ENCODE measurements at regions of chr12 and their contacts with region 1.

Region 1: DNA sequence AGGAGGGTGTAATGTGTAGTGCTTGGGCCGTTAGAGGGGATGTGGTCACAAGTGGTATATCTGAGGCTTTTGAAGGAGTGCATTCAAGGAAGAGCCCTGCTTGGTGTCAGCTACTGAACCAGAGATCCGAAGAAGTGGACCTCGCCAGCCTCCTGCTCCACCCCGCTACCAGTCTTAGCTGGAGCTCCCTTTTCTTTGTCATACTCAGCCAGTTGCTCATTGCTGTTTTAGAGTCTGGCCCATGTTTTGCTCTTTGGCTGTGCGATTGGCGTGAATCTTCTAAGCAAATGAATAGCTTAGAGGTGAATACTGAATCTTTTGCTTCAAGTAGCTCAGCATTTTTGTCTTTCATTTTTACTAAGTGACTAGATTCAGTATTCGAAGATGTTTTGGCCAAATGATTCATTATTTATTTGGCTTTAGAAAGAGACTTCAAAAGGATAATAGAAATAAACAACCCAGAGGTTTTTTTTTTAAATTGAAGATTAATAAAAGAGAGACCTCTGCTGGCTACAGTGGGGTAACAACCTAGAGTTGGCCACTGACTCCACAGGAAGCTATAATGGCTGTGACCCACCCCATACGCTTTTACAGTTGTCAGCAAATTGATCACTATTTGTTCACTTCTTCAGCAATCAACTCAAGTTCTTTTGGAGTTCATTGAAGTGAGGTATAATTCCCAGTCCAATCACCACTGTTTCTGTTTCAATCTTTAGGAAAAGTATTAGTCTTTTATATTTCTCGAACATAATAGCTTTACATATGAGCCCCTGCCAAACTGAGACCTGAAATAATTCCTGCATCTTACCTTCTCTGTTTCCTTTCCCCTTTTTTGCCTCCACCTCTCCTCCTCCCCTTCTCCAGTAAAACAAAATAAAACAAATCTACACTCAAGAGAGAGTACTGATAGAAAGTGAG is 19.9 kb downstream of the CDKN1B start:
- DNase-seq: no peak
- H3K4me3 ChIP-seq: peak overlapping the region; percentile 16; the same call in 1 of the 2 replicates
- CTCF ChIP-seq: peak; percentile 36

Region 2: DNA sequence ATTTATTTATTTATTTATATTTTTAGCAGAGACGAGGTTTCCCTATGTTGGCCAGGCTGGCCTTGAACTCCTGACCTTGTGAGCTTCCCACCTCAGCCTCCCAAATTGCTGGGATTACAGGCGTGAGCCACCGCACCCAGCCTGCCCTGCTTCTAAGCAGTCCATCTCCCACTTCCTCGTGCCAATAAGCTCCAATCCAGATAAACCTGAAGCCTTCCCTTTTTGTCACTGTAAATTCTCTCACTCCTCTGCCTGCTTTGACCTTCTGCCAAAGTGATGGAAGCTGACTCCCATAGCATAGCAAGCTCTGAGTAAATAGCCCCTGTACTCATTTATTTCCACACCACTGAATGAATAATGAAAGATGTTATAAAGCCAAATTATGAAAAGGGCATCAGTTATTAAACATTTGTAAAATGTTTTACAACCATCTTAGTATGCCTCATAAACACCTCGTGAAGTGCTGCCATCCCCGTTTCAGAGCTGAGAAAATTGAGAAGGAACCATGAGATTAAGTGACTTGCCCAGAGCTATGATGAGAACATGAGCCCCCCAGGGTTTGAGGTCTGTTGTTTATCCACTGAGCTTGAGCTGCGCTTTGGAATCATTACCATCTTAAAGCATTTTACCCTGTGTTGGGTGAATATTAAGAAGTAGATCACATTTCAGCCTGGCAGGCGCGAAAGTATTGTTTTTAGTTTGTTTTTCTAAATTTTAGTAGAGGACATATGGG is 417.4 kb before region 1 on chr12:
- CTCF ChIA-PET with region 1: no interaction called
- POLR2A ChIA-PET with region 1: no interaction called
- DNase-seq: no peak
- H3K4me3 ChIP-seq: no peak overlapping the region
- CTCF ChIP-seq: no peak

Region 3: DNA sequence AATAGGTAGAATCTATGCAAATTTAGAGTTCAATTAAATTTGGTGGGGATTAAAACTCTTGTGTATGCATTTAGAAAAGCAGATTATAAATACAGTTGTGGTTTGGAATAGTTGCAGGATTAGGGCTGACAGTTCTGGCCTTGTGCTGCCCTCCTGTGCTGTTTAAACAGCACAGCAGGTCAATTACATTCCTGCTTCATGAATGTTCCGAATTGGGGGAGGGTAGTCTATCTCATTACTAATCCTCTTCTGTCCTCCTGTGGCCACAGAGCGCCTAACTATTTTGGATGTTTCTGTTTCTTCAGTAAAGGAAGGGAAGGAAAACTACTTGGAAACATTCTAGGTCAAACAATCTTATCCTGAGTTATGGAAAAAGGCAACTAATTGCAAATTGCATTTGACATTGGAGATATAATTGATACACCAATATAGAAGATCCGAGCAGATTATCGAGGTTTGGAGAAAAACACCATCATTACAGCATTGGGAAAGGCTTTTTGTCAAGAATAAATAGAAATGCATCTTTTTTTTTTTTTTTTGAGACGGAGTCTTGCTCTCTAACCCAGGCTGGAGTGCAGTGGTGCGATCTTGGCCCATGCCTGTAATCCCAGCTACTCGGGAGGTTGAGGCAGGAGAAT is 32.3 kb before region 1 on chr12:
- CTCF ChIA-PET with region 1: interaction called, 16 read pairs
- POLR2A ChIA-PET with region 1: no interaction called
- DNase-seq: peak; percentile 86
- H3K4me3 ChIP-seq: no peak overlapping the region
- CTCF ChIP-seq: peak; percentile 78

Region 4: DNA sequence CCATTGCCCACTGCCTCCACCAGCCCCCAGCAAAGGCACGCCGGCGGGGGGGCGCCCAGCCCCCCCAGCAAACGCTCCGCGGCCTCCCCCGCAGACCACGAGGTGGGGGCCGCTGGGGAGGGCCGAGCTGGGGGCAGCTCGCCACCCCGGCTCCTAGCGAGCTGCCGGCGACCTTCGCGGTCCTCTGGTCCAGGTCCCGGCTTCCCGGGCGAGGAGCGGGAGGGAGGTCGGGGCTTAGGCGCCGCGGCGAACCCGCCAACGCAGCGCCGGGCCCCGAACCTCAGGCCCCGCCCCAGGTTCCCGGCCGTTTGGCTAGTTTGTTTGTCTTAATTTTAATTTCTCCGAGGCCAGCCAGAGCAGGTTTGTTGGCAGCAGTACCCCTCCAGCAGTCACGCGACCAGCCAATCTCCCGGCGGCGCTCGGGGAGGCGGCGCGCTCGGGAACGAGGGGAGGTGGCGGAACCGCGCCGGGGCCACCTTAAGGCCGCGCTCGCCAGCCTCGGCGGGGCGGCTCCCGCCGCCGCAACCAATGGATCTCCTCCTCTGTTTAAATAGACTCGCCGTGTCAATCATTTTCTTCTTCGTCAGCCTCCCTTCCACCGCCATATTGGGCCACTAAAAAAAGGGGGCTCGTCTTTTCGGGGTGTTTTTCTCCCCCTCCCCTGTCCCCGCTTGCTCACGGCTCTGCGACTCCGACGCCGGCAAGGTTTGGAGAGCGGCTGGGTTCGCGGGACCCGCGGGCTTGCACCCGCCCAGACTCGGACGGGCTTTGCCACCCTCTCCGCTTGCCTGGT is 20.0 kb before region 1 on chr12 and contains the start of gene CDKN1B:
- CTCF ChIA-PET with region 1: interaction called, 50 read pairs
- POLR2A ChIA-PET with region 1: no interaction called
- DNase-seq: no peak
- H3K4me3 ChIP-seq: peak within 1 kb of the TSS; percentile 89
- CTCF ChIP-seq: no peak

Region 5: GRCh38 chr12:12724661-12725545 is 12.1 kb before region 1 on chr12:
- CTCF ChIA-PET with region 1: interaction called, 50 read pairs
- POLR2A ChIA-PET with region 1: interaction called, 6 read pairs
- DNase-seq: peak; percentile 95
- H3K4me3 ChIP-seq: peak overlapping the region; percentile 80
- CTCF ChIP-seq: no peak

Region 6: DNA sequence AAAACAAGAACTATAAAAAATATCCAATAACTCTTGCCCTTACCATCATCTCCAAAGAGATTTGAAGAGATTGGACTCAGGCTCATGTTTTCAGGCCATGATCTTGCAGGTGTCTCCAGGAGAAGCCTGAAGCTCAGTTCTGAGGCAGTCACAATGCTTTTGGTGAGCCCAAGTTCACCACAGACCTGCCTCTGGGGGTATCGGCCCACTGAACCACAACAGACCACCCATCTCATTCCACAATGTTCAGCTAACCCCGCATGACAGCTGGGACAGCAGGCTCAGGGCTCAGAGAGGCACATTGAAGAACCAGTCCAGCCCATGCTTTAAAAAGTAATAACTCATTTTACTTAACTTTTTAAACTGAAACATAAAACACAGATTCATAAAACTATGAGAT is 20.1 kb after region 1 on chr12:
- CTCF ChIA-PET with region 1: interaction called, 18 read pairs
- POLR2A ChIA-PET with region 1: no interaction called
- DNase-seq: no peak
- H3K4me3 ChIP-seq: no peak overlapping the region
- CTCF ChIP-seq: no peak

Measured in AG04449 (cell line).